ENCODE measurements at regions of chr1 and their contacts with region 1.

Region 1: GRCh38 chr1:169546087-169546995 is 39.9 kb downstream of the F5 start:
- DNase-seq: no peak
- H3K4me3 ChIP-seq: no peak overlapping the region
- H3K27ac ChIP-seq: no peak overlapping the region
- H3K4me1 ChIP-seq: no peaks in the 10 kb centered on the region
- H3K27me3 ChIP-seq: no peaks in the 10 kb centered on the region
- CTCF ChIP-seq: peak; percentile 42 to 90 (median 71)
- POLR2A ChIP-seq: no peak

Region 2: GRCh38 chr1:169466259-169467230 is 79.8 kb before region 1 on chr1:
- intact Hi-C with region 1: loop called (anchors 5 kb)
- DNase-seq: no peak
- H3K4me3 ChIP-seq: no peak overlapping the region
- H3K27ac ChIP-seq: no peak overlapping the region
- H3K4me1 ChIP-seq: no peaks in the 10 kb centered on the region
- H3K27me3 ChIP-seq: no peaks in the 10 kb centered on the region
- CTCF ChIP-seq: peak in 6 of 11 experiments; percentile 20 to 39 (median 36)
- POLR2A ChIP-seq: no peak

Region 3: DNA sequence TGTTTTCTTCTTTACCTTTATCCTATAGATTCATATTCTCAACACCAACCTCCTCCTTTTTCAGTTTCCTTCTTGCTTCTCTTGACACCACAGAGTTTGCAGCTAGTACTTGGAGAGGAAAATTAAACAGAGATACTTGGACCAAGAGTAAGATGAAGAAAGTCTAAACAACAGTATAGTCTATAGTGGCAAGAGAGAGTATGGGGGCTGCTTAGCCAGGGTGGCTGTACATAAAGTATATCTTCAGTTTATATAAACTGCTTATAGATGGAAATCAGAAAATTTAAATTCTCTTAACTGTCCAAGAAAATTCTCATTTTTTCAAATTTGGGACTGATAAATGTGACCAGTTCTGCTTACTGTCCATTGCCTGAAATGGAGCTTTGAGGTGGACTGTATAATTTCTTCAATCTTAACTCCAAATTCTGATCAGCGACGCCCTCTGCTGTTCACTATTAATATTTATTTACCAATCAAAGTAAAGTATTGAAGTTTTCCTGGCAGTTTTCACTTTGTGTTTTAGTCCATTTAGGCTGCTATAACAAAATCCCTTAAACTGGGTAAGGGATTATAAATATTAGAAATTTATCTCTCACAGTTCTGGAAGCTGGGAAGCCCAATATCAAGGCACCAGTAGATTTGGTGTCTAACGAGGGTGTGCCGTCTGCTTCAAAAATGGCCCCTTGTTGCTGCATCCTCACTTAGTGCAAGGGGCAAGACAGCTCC is 263.2 kb after region 1 on chr1:
- intact Hi-C with region 1: loop called (anchors 5 kb)
- DNase-seq: no peak
- H3K4me3 ChIP-seq: no peak overlapping the region
- H3K27ac ChIP-seq: no peak overlapping the region
- H3K4me1 ChIP-seq: no peaks in the 10 kb centered on the region
- H3K27me3 ChIP-seq: no peaks in the 10 kb centered on the region
- CTCF ChIP-seq: peak in 10 of 11 experiments; percentile 27 to 60 (median 48)
- POLR2A ChIP-seq: no peak

Measured in spleen (tissue), 13 donors.